ENCODE measurements at regions of chr1 and their contacts with region 1.

Region 1: DNA sequence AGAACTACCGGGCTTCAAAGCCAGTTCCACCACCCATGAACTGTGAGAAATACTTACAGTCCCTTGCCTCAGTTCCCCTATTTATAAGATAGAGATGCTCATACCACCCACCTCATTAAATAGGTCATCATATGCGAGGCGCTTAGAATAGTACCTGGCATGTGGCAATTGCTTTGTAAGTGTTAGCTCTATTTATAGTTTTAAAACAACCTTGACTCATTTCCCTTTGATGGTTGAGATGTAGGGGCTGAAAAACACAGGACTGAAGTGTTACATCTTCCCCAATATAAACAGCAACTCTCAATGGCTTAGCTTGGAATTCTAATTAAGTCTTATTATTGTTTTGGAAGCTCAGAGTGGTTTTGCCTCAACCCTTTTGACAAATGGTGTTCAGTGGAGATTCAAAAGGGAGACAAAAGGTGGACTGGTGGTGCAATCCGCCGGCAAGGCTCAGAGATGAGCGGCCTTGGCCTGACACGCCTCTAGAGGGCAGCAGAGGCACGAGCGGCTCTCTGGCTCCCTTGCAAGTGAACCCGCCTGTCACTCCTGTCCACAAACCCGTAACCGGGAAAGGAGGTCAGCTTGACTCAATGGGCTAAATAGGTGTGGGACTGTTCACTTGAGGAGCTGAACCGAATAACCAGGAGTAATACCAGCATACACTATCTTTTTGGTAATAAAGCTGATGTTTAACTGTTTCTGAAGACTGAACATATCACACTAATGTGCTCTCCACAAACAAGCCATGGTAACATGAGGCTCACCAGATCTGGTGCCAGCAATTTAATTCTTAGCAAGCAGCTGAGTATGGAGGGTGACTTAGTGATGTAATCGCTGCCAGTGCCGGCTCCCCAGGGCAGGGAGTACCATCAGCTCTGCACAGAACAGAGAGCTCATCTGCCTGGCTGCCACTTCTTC is 19.5 kb upstream of the SMYD2 start:
- H3K4me3 ChIP-seq: no peak overlapping the region
- H3K27ac ChIP-seq: no peak overlapping the region
- H3K4me1 ChIP-seq: no peaks in the 10 kb centered on the region
- CTCF ChIP-seq: peak; percentile 88

Region 2: DNA sequence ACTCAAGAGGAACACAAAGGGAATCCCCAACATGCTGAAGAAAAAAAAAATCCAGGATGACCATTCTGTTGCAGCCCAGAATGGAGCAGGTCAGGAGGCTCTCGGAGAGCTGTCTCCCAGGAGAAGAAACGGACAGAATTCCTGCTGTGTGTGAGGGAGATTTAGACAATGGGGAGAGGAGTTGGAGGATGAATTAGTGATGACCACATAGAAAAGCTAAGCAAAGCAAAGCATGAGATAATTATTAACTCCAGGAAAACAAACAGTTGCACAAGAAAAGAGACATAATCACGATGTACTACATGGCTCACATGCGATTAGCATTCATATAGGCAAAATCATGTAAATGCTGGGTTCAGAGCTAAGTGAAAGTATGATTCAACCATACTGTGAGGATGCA is 41.6 kb before region 1 on chr1:
- CTCF ChIA-PET with region 1: interaction called, 44 read pairs
- POLR2A ChIA-PET with region 1: no interaction called
- H3K4me3 ChIP-seq: no peak overlapping the region
- H3K27ac ChIP-seq: no peak overlapping the region
- H3K4me1 ChIP-seq: no peaks in the 10 kb centered on the region
- CTCF ChIP-seq: no peak

Region 3: DNA sequence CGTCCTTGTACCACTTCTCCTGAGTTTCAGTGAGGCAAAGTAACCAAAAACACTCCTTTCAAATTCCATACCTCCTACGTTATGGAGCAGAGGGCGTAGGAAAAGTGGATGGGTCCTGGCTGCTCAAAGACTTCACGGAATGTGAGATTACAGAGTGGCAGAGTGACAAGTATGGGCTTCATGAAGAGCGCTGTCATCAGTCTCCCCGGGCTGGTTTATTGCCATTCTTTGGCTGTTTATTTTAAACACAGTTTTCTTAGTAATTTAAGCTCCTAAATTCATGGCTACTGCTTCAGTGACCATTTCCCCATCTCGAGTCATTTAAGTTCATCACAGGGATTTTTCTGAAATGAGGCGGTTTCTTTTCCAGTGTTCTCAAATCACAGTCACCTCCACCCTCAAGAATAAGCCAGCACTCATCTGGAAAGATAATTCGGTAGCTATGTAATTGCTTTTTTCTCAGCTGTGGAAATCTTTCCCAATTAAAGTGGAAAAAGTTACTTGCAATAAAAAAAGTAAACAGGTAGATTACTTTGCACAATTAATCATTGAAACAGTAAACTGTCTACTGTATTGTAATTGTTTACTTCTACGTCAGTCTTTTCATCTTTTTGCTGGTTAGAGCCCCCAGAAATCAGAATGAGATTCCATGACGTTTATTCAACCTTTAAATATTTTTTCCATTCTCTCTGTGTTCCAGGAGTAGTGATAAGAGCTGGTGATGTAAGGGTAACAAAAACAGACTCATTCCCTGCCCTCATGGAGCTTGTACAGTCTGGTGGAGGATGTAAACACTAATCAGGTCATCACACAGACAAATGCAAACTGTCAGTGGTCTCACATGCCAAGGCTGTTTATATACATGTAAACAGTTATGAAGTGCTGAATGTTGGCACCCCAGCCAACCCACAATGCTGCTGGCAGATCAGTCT is 16.5 kb after region 1 on chr1:
- CTCF ChIA-PET with region 1: interaction called, 49 read pairs
- POLR2A ChIA-PET with region 1: no interaction called
- H3K4me3 ChIP-seq: no peak overlapping the region
- H3K27ac ChIP-seq: no peak overlapping the region
- H3K4me1 ChIP-seq: peaks cover 8% of the 10 kb centered on the region
- CTCF ChIP-seq: no peak

Region 4: DNA sequence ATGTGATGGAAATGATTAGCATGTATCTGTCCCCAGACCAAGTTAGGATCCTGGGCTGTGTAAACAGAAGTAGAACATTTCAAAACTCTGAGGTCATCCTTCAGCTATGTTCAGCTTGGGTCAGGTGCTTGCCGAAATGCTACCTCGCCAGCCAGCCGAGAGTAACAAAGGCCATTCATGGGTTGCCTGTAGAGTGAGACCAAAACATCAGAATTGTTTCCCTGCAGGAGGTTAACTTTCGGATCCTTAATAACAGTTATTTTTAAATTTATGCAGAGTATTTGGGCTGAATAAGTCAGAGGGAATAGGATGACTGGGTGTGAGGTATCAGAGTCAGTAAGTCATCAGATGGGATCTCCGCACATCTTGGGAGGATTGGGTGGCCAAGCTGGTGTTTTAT is 55.1 kb after region 1 on chr1:
- CTCF ChIA-PET with region 1: interaction called, 27 read pairs
- POLR2A ChIA-PET with region 1: no interaction called
- H3K4me3 ChIP-seq: no peak overlapping the region
- H3K27ac ChIP-seq: no peak overlapping the region
- H3K4me1 ChIP-seq: no peaks in the 10 kb centered on the region
- CTCF ChIP-seq: no peak

Region 5: GRCh38 chr1:214337511-214337910 is 76.0 kb after region 1 on chr1:
- CTCF ChIA-PET with region 1: interaction called, 428 read pairs
- POLR2A ChIA-PET with region 1: no interaction called
- H3K4me3 ChIP-seq: no peak overlapping the region
- H3K27ac ChIP-seq: no peak overlapping the region
- H3K4me1 ChIP-seq: no peaks in the 10 kb centered on the region
- CTCF ChIP-seq: no peak